ENCODE measurements at regions of chr7 and their contacts with region 1.

Region 1: DNA sequence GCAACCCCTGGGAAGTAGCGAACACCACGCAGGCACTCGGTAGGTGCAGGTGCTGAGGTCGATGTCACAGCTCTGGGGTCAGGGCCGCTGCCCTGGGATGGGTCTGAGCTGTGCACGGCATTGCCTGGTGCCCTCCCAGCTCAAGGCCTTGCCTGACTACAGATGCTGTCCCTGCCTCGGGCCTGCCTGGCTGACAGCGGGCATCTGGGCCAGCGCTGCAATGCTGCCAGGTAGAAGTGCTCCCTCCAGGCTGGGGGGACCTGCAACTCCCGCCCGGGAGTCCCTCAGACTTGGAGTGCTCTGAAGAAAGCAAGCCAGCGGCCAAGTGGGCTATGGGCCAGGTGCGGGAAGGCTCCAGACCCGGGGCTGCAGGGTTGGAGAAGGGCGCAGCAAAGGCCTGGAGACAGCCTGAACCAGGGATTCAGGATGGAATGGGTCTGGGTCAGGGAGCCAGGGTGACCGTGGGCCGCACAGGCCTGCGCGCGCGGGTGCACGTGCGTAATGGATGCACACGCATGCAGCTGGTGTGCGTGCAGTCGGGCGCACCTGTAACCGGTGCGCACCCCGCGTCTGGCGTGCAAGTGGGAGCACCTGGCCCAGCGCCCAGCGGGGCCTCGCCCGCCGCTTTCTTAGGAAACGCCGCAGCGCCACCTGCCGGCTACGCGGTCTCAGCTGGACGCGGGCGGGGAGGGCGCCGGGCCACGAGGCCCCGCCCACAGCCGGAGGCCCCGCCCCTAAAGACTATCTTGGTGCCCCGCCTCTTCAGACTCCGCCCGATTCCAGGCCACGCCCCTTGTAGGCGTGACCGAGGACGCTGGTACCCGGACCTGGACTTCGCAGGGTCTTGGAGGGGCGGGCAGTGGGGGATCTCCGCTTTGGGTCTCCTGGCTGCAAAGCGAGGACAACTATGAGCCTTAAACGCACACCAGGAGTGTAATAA is 46.7 kb downstream of the MICALL2 start:
- DNase-seq: peak; percentile 83 to 92
- H3K4me3 ChIP-seq: no peak overlapping the region
- H3K4me3 Mint-ChIP-seq: peak overlapping the region; percentile 19
- H3K27ac Mint-ChIP-seq: no peak overlapping the region
- H3K4me1 ChIP-seq: no peaks in the 10 kb centered on the region
- H3K4me1 Mint-ChIP-seq: no peaks in the 10 kb centered on the region
- H3K27me3 ChIP-seq: no peaks in the 10 kb centered on the region
- H3K27me3 Mint-ChIP-seq: peaks cover 3% of the 10 kb centered on the region
- CTCF ChIP-seq: peak; percentile 65 to 71

Region 2: GRCh38 chr7:1181640-1182039 is 231.0 kb before region 1 on chr7:
- CTCF ChIA-PET with region 1: no interaction called
- POLR2A ChIA-PET with region 1: no interaction called
- intact Hi-C with region 1: loop called (anchors 2 kb)
- DNase-seq: no peak
- H3K4me3 ChIP-seq: no peak overlapping the region
- H3K4me3 Mint-ChIP-seq: no peak overlapping the region
- H3K27ac Mint-ChIP-seq: no peak overlapping the region
- H3K4me1 ChIP-seq: peaks cover 2% of the 10 kb centered on the region; the same call in 1 of the 2 replicates
- H3K4me1 Mint-ChIP-seq: no peaks in the 10 kb centered on the region
- H3K27me3 ChIP-seq: no peaks in the 10 kb centered on the region
- H3K27me3 Mint-ChIP-seq: peaks cover 9% of the 10 kb centered on the region
- CTCF ChIP-seq: no peak

Region 3: GRCh38 chr7:1225441-1226185 is 187.0 kb before region 1 on chr7:
- CTCF ChIA-PET with region 1: no interaction called
- POLR2A ChIA-PET with region 1: no interaction called
- intact Hi-C with region 1: loop called (anchors 2 kb)
- DNase-seq: peak in 1 of 2 experiments; percentile 45
- H3K4me3 ChIP-seq: no peak overlapping the region
- H3K4me3 Mint-ChIP-seq: no peak overlapping the region
- H3K27ac Mint-ChIP-seq: no peak overlapping the region
- H3K4me1 ChIP-seq: no peaks in the 10 kb centered on the region
- H3K4me1 Mint-ChIP-seq: no peaks in the 10 kb centered on the region
- H3K27me3 ChIP-seq: no peaks in the 10 kb centered on the region; the same call in 1 of the 2 replicates
- H3K27me3 Mint-ChIP-seq: peaks cover 12% of the 10 kb centered on the region
- CTCF ChIP-seq: peak; percentile 60 to 82

Region 4: GRCh38 chr7:1569833-1570633 is 157.4 kb after region 1 on chr7 and contains the start of gene PSMG3:
- CTCF ChIA-PET with region 1: no interaction called
- POLR2A ChIA-PET with region 1: no interaction called
- intact Hi-C with region 1: no loop called
- DNase-seq: peak; percentile 86 to 92
- H3K4me3 ChIP-seq: peak within 1 kb of the TSS; percentile 57
- H3K4me3 Mint-ChIP-seq: peak within 1 kb of the TSS; percentile 78
- H3K27ac Mint-ChIP-seq: peak within 1 kb of the TSS; percentile 84
- H3K4me1 ChIP-seq: peaks cover 20% of the 10 kb centered on the region
- H3K4me1 Mint-ChIP-seq: peaks cover 24% of the 10 kb centered on the region
- H3K27me3 ChIP-seq: no peaks in the 10 kb centered on the region
- H3K27me3 Mint-ChIP-seq: no peaks in the 10 kb centered on the region
- CTCF ChIP-seq: peak in 1 of 2 experiments; percentile 32
- total RNA-seq, gene PSMG3: 35.1 and 38.1 TPM in 2 replicates

Region 5: GRCh38 chr7:1593091-1593866 is 180.7 kb after region 1 on chr7:
- CTCF ChIA-PET with region 1: no interaction called
- POLR2A ChIA-PET with region 1: no interaction called
- intact Hi-C with region 1: no loop called
- DNase-seq: peak in 1 of 2 experiments; percentile 46
- H3K4me3 ChIP-seq: no peak overlapping the region
- H3K4me3 Mint-ChIP-seq: no peak overlapping the region
- H3K27ac Mint-ChIP-seq: no peak overlapping the region
- H3K4me1 ChIP-seq: no peaks in the 10 kb centered on the region
- H3K4me1 Mint-ChIP-seq: no peaks in the 10 kb centered on the region
- H3K27me3 ChIP-seq: no peaks in the 10 kb centered on the region
- H3K27me3 Mint-ChIP-seq: peaks cover 30% of the 10 kb centered on the region
- CTCF ChIP-seq: peak; percentile 50 to 62

Measured in Caco-2 (cell line).